ENCODE measurements at regions of chr2 and their contacts with region 1.

Region 1: DNA sequence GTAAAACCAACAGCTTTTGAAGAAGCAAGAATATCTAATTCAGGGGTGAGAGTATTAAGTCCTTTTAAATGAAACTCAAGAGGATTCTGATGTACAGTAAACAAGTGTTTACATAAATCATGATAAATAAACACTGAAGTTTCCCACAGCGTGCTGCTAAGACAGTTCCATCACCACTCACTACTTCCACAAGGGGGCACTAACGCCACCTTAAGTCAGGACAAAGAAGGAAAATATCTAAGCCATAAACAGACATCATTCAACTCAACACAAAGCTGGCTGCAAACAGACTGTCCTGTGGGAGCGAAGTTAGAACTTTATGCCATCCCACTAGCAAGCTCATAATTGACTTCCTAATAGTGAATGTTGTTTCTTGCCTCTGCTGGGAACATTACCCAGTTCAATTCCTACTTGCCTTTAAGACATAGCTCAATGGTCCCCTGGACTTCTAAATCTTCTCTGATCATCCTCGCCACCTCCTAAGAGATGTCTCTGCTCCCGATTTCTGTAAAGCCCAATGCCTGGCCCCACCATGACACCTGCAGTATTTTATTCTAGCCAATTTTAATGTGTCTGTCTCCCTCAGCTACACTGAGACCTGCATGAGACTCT is 36.5 kb downstream of the MRPL44 start:
- DNase-seq: peak; percentile 11 to 67 (median 62)
- ATAC-seq: peak; percentile 83
- H3K4me3 ChIP-seq: no peak overlapping the region
- H3K4me3 Mint-ChIP-seq: no peak overlapping the region
- H3K27ac ChIP-seq: no peak overlapping the region
- H3K27ac Mint-ChIP-seq: no peak overlapping the region
- H3K4me1 ChIP-seq: no peaks in the 10 kb centered on the region
- H3K4me1 Mint-ChIP-seq: peaks cover 0 to 22% (median 0%) of the 10 kb centered on the region in 7 donors
- H3K27me3 ChIP-seq: no peaks in the 10 kb centered on the region
- H3K27me3 Mint-ChIP-seq: no peaks in the 10 kb centered on the region

Region 2: GRCh38 chr2:222976521-222977076 is 1017.1 kb before region 1 on chr2:
- CTCF ChIA-PET with region 1: no interaction called
- POLR2A ChIA-PET with region 1: no interaction called
- intact Hi-C with region 1: loop called in 1 of 2 experiments (anchors 5 kb)
- DNase-seq: no peak
- ATAC-seq: no peak
- H3K4me3 ChIP-seq: no peak overlapping the region
- H3K4me3 Mint-ChIP-seq: no peak overlapping the region
- H3K27ac ChIP-seq: no peak overlapping the region
- H3K27ac Mint-ChIP-seq: no peak overlapping the region
- H3K4me1 ChIP-seq: no peaks in the 10 kb centered on the region
- H3K4me1 Mint-ChIP-seq: no peaks in the 10 kb centered on the region
- H3K27me3 ChIP-seq: no peaks in the 10 kb centered on the region
- H3K27me3 Mint-ChIP-seq: peaks cover 12 to 37% (median 15%) of the 10 kb centered on the region in 5 donors

Region 3: GRCh38 chr2:224039124-224039940 is 45.6 kb after region 1 on chr2 and contains the start of gene SERPINE2:
- CTCF ChIA-PET with region 1: interaction called, 4 read pairs
- POLR2A ChIA-PET with region 1: interaction called, 4 read pairs
- intact Hi-C with region 1: loop called (anchors 1 kb)
- DNase-seq: peak; percentile 25 to 69 (median 45)
- ATAC-seq: peak; percentile 74
- H3K4me3 ChIP-seq: peak within 1 kb of the TSS; percentile 65
- H3K4me3 Mint-ChIP-seq: peak within 1 kb of the TSS; percentile 86 to 99 (median 92)
- H3K27ac ChIP-seq: peak within 1 kb of the TSS; percentile 45
- H3K27ac Mint-ChIP-seq: peak within 1 kb of the TSS; percentile 37 to 88 (median 69)
- H3K4me1 ChIP-seq: peaks cover 0 to 5% of the 10 kb centered on the region in 2 donors
- H3K4me1 Mint-ChIP-seq: peaks cover 13 to 40% (median 30%) of the 10 kb centered on the region in 7 donors
- H3K27me3 ChIP-seq: peaks cover 0 to 4% of the 10 kb centered on the region in 2 donors
- H3K27me3 Mint-ChIP-seq: peaks cover 0 to 51% (median 12%) of the 10 kb centered on the region in 5 donors
- total RNA-seq, gene SERPINE2: 5.2 to 18.1 (median 8.1) TPM

Region 4: GRCh38 chr2:224127871-224128501 is 134.3 kb after region 1 on chr2:
- CTCF ChIA-PET with region 1: no interaction called
- POLR2A ChIA-PET with region 1: no interaction called
- intact Hi-C with region 1: loop called in 1 of 2 experiments (anchors 10 kb)
- DNase-seq: no peak
- ATAC-seq: no peak
- H3K4me3 ChIP-seq: no peak overlapping the region
- H3K4me3 Mint-ChIP-seq: no peak overlapping the region
- H3K27ac ChIP-seq: no peak overlapping the region
- H3K27ac Mint-ChIP-seq: no peak overlapping the region
- H3K4me1 ChIP-seq: no peaks in the 10 kb centered on the region
- H3K4me1 Mint-ChIP-seq: no peaks in the 10 kb centered on the region
- H3K27me3 ChIP-seq: no peaks in the 10 kb centered on the region
- H3K27me3 Mint-ChIP-seq: peaks cover 4 to 29% (median 16%) of the 10 kb centered on the region in 5 donors

Region 5: GRCh38 chr2:224284134-224284946 is 290.6 kb after region 1 on chr2:
- CTCF ChIA-PET with region 1: interaction called, 114 read pairs
- POLR2A ChIA-PET with region 1: no interaction called
- intact Hi-C with region 1: loop called (anchors 1 kb)
- DNase-seq: peak in 6 of 9 donors; percentile 8 to 46 (median 42)
- ATAC-seq: peak; percentile 29
- H3K4me3 ChIP-seq: no peak overlapping the region
- H3K4me3 Mint-ChIP-seq: no peak overlapping the region
- H3K27ac ChIP-seq: no peak overlapping the region
- H3K27ac Mint-ChIP-seq: no peak overlapping the region
- H3K4me1 ChIP-seq: no peaks in the 10 kb centered on the region
- H3K4me1 Mint-ChIP-seq: no peaks in the 10 kb centered on the region
- H3K27me3 ChIP-seq: no peaks in the 10 kb centered on the region
- H3K27me3 Mint-ChIP-seq: peaks cover 32 to 39% (median 37%) of the 10 kb centered on the region in 5 donors

Region 6: DNA sequence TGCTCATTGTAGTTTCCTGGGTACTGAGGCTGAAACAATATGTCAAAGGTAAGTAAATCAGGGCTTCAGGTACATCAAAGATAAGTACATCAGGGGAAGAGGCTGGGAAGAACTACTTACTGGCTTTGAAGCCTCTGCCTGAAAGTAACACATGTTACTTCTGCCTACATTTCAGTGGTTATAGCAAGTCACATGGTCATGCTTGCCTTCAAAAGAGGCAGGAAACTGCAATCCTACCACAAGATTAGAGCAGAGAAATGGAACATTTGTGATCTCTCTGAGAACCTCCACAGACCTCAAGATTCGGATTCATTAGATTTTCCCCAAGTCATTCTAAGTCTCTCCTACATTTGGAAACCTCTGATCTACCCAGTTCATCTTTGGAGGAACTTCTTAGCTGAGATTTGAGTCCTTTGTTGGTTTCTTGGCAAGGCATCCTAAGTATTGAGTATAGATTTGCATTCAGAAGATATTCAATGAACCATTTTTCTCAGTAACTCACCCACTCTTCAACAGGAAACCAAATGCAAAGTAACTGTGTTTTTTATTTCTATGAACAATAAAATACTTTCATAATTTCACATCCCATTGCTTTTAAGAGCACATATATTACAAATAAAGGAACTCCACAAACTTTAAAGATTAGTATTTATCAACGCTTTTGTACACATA is 771.0 kb after region 1 on chr2:
- CTCF ChIA-PET with region 1: no interaction called
- POLR2A ChIA-PET with region 1: no interaction called
- intact Hi-C with region 1: no loop called
- DNase-seq: peak in 7 of 9 donors; percentile 39 to 72 (median 53)
- ATAC-seq: peak; percentile 88
- H3K4me3 ChIP-seq: no peak overlapping the region
- H3K4me3 Mint-ChIP-seq: peak overlapping the region; percentile 7 to 77 (median 38)
- H3K27ac ChIP-seq: peak overlapping the region; percentile 34
- H3K27ac Mint-ChIP-seq: peak overlapping the region; percentile 70 to 92 (median 76)
- H3K4me1 ChIP-seq: peaks cover 0 to 18% of the 10 kb centered on the region in 2 donors
- H3K4me1 Mint-ChIP-seq: peaks cover 20 to 69% (median 42%) of the 10 kb centered on the region in 7 donors
- H3K27me3 ChIP-seq: no peaks in the 10 kb centered on the region
- H3K27me3 Mint-ChIP-seq: no peaks in the 10 kb centered on the region